Activated naive CD4-positive, alpha-beta T cell treated with anti-CD3 and anti-CD28 coated beads for 36 hours (primary cell): ENCODE measurements at regions of chr5 and their contacts with region 1.

Region 1: GRCh38 chr5:96536991-96537785 is 104.1 kb upstream of the PCSK1 start:
- DNase-seq: no peak
- H3K4me3 Mint-ChIP-seq: no peak overlapping the region
- H3K27ac Mint-ChIP-seq: peak overlapping the region; percentile 83
- H3K4me1 Mint-ChIP-seq: peaks cover 32% of the 10 kb centered on the region
- H3K27me3 Mint-ChIP-seq: no peaks in the 10 kb centered on the region

Region 2: GRCh38 chr5:95631991-95632675 is 905.1 kb before region 1 on chr5:
- CTCF ChIA-PET with region 1: no interaction called
- intact Hi-C with region 1: loop called (anchors 5 kb)
- DNase-seq: peak; percentile 89
- H3K4me3 Mint-ChIP-seq: peak overlapping the region; percentile 53
- H3K27ac Mint-ChIP-seq: peak overlapping the region; percentile 94
- H3K4me1 Mint-ChIP-seq: peaks cover 20% of the 10 kb centered on the region
- H3K27me3 Mint-ChIP-seq: no peaks in the 10 kb centered on the region

Region 3: GRCh38 chr5:95870105-95870672 is 667.0 kb before region 1 on chr5:
- CTCF ChIA-PET with region 1: no interaction called
- intact Hi-C with region 1: loop called (anchors 1 kb)
- DNase-seq: peak; percentile 65
- H3K4me3 Mint-ChIP-seq: peak overlapping the region; percentile 68
- H3K27ac Mint-ChIP-seq: peak overlapping the region; percentile 99
- H3K4me1 Mint-ChIP-seq: peaks cover 59% of the 10 kb centered on the region
- H3K27me3 Mint-ChIP-seq: no peaks in the 10 kb centered on the region

Region 4: GRCh38 chr5:96509721-96510333 is 27.4 kb before region 1 on chr5:
- CTCF ChIA-PET with region 1: no interaction called
- intact Hi-C with region 1: loop called (anchors 2 kb)
- DNase-seq: no peak
- H3K4me3 Mint-ChIP-seq: no peak overlapping the region
- H3K27ac Mint-ChIP-seq: no peak overlapping the region
- H3K4me1 Mint-ChIP-seq: peaks cover 4% of the 10 kb centered on the region
- H3K27me3 Mint-ChIP-seq: peaks cover 5% of the 10 kb centered on the region

Region 5: DNA sequence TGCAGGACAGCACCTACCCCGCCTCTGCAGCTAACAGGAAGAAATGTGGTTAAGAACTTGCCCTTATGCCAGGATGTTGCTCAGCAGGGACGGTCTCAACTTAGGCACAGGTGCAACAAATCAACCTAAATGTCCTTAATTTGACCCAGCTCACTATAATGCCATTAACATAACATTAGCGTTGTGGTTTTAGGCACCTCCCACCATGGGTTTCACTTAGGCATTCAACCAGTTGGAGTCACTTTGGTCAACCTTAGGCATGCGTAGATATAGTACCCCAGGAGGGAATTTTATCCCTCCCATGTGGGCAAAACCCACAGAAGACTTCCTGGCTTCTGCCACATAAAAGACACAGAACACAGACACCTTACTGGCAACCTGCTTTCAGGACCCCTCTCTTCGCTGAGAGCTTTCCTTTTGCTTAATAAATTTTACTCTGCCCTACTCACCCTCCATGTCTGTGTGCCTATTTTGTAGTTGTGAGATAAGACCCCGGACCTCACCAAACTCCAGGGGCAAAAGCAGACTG is 279.3 kb after region 1 on chr5:
- CTCF ChIA-PET with region 1: no interaction called
- intact Hi-C with region 1: loop called (anchors 5 kb)
- DNase-seq: peak; percentile 84
- H3K4me3 Mint-ChIP-seq: peak overlapping the region; percentile 71
- H3K27ac Mint-ChIP-seq: peak overlapping the region; percentile 91
- H3K4me1 Mint-ChIP-seq: peaks cover 80% of the 10 kb centered on the region
- H3K27me3 Mint-ChIP-seq: no peaks in the 10 kb centered on the region

Region 6: DNA sequence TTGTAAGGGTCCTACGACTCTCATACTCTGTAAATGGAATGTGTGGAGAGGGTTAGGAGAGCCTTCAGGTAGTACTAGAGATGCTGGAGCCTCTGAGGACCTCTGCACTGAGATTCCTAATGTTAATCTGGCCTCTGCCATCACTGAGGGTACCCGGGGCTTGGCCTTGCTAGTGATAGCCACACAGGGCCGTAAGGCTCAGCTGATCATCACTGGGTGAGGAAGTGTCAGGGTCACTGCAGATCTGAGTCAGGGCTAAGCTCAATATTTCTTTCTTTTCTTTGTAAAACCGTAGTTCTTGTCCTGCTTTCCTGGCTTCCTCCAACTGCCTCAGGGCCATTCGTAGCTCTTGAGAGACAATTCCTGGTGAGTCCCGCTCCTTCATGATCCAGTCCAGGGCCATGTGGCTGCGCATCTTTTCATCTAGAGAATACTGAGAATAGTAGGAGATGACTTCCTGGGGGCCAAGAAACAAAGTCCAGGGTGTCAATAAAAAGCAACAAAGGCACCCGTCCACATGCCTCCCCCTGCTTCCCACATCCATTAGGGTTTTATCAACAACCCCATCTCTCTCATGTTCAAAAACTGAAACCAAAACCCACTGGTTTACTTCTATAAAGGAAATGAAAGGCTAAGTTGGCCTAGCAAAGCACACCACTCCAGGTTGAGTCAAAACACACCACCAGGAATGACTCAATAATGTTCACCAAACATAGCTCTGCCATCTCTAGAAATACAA is 557.6 kb after region 1 on chr5:
- CTCF ChIA-PET with region 1: no interaction called
- intact Hi-C with region 1: loop called (anchors 1 kb)
- DNase-seq: peak; percentile 68
- H3K4me3 Mint-ChIP-seq: no peak overlapping the region
- H3K27ac Mint-ChIP-seq: no peak overlapping the region
- H3K4me1 Mint-ChIP-seq: peaks cover 16% of the 10 kb centered on the region
- H3K27me3 Mint-ChIP-seq: peaks cover 6% of the 10 kb centered on the region